SK-N-SH (cell line): ENCODE measurements at regions of chr3 and their contacts with region 1.

Region 1: DNA sequence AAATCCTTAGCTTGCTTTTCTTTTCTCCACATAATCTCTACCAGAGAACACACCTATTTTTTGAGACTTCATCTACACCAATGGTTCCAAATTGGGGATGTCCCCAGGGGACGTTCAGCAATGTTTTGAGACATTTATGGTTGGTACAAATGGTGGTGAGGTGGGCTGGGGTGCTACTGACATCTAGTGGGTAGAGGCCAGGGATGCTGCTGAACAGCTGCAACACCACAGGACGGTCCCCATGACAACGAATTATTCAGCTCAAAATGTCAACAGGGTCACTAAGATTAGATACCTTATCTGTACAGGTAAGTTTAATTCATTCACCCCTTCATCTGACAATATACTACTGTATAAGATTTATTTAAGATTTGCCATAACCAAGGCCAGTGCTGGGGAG is 14.3 kb downstream of the GK5 start:
- DNase-seq: peak; percentile 29
- H3K4me3 ChIP-seq: peak overlapping the region in 1 of 2 experiments; percentile 14; a peak in 1 of 4 replicates
- H3K27ac ChIP-seq: no peak overlapping the region; a peak in 1 of 4 replicates
- H3K4me1 ChIP-seq: peaks cover 4 to 8% of the 10 kb centered on the region in 2 experiments; a peak in 3 of 4 replicates
- H3K27me3 ChIP-seq: no peaks in the 10 kb centered on the region
- CTCF ChIP-seq: peak; percentile 37
- EP300 ChIP-seq: no peak
- RAD21 ChIP-seq: peak; percentile 59

Region 2: DNA sequence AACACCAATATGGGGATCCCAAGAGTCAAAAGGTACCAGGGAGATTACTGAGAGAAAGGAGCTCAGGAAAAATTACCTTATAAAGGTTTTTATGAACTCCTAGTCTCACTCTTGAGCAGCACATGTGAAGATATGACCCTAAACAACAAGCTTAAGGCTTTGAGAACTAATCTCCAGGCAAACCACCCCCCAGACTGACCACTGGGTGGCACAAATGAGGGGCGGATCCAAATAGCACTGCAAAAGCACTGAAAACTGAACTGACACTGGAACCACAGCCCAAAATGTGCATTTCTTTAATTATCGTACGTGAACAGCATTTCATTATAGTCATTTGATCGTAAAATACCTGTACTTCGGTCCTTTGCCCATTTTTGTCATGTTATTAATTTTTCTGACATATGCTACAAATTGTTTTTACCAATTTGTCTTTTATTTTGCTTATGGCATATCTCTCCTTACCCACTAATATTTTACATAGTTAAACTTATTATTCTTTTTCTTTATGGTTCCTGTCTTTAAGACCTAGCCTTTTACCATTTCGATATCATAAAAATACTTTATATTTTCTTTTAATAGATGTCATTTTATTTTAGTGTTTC is 30.2 kb before region 1 on chr3:
- CTCF ChIA-PET with region 1: interaction called, 11 read pairs
- POLR2A ChIA-PET with region 1: no interaction called
- DNase-seq: peak; percentile 58
- H3K4me3 ChIP-seq: no peak overlapping the region
- H3K27ac ChIP-seq: no peak overlapping the region
- H3K4me1 ChIP-seq: no peaks in the 10 kb centered on the region
- H3K27me3 ChIP-seq: no peaks in the 10 kb centered on the region
- CTCF ChIP-seq: peak; percentile 72
- EP300 ChIP-seq: no peak
- RAD21 ChIP-seq: peak; percentile 50

Region 3: DNA sequence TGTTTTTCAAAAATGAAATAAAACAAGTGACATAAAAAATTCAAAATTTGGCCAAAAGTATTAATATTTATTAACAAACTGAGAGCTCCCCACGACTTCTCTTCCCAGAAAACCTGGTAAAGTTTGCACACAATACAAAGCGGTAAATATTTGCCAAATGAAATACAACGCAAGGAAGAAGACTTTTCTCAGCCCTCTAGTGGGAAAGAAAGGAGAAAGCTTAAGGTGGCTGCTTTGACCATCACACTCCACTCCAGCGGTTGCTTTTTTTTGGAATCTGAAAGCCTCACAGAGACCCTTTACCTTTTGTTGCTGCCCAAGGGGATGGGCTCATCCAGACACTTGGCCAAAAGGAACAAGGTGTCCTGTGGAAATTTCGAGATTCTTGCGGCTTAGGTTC is 15.4 kb after region 1 on chr3:
- CTCF ChIA-PET with region 1: no interaction called
- POLR2A ChIA-PET with region 1: no interaction called
- DNase-seq: no peak
- H3K4me3 ChIP-seq: no peak overlapping the region
- H3K27ac ChIP-seq: no peak overlapping the region
- H3K4me1 ChIP-seq: peaks cover 4 to 10% of the 10 kb centered on the region in 2 experiments; a peak in 2 of 4 replicates
- H3K27me3 ChIP-seq: no peaks in the 10 kb centered on the region
- CTCF ChIP-seq: peak; percentile 23
- EP300 ChIP-seq: no peak
- RAD21 ChIP-seq: no peak